Activated CD4-positive, alpha-beta T cell treated with anti-CD3 and anti-CD28 coated beads for 36 hours (primary cell): ENCODE measurements at regions of chr4 and their contacts with region 1.

Region 1: DNA sequence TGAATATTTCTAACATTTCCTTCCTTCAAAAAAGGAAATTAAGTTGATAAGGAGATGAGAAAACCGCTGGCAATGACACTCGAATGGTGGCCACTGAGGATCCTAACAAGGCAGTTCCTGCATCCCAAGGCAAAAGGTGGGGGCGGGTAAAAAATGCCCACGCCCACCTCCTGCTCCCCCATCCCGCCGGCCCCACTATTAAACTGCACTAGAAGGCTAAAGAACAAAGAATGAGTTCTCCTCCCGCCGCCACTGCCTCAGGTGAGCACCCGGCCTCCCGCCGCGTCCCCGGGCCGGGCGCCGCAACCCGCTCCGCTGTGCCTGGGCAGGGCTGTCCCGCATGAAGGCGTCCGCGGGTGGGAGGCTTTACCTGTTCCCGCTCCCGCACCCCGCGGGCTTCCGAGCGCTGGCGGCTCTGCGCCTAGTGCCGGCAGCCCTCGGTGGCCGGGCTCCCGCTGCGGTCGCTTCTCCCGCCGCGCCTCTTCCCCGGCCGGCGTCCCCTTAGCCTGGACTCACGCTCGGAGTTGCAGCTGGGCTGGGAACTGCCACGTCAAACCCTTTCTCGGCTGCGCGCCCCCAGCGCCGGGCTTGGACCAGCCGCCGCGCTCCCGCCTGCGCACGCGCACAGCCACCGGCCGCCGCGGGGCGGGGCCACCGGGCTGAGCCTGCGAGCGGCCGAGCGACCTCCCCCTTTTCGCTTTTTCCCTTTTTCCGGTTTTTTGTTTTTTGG is at the start of gene SEC24D:
- DNase-seq: peak; percentile 91
- ATAC-seq: peak; percentile 88
- H3K4me3 Mint-ChIP-seq: peak within 1 kb of the TSS; percentile 86
- H3K27ac Mint-ChIP-seq: peak within 1 kb of the TSS; percentile 98
- H3K4me1 Mint-ChIP-seq: peaks cover 20% of the 10 kb centered on the region
- H3K27me3 Mint-ChIP-seq: no peaks in the 10 kb centered on the region
- total RNA-seq, gene SEC24D: 28.5 to 33.0 TPM

Region 2: GRCh38 chr4:118278473-118279274 is 557.1 kb before region 1 on chr4:
- CTCF ChIA-PET with region 1: no interaction called
- POLR2A ChIA-PET with region 1: no interaction called
- intact Hi-C with region 1: loop called (anchors 2 to 5 kb)
- DNase-seq: peak; percentile 99
- ATAC-seq: peak; percentile 96
- H3K4me3 Mint-ChIP-seq: peak overlapping the region; percentile 96
- H3K27ac Mint-ChIP-seq: peak overlapping the region; percentile 99
- H3K4me1 Mint-ChIP-seq: peaks cover 37% of the 10 kb centered on the region
- H3K27me3 Mint-ChIP-seq: no peaks in the 10 kb centered on the region

Region 3: DNA sequence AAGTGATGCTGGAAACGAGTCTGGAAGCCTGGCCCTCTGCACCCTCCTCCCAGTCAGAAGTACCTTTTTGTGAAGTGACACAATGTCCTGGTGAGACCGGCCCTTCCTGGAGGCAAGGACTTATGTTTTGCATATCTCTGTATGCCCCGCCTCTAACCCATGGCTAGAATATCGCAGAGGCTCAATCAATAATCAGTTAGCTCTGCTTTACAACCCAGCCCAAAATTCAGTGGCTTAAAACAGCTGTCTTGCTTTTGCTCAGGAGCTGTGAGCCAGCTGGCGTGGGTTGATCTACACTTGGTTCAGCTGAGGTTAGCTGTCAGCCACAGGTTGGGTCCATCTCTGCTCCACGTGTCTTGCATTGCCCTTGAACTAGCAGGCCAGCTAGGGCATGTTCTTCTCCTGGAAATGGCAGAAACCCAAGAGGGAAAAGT is 249.4 kb before region 1 on chr4:
- CTCF ChIA-PET with region 1: no interaction called
- POLR2A ChIA-PET with region 1: no interaction called
- intact Hi-C with region 1: loop called in 1 of 2 experiments (anchors 1 kb)
- DNase-seq: no peak
- ATAC-seq: no peak
- H3K4me3 Mint-ChIP-seq: no peak overlapping the region
- H3K27ac Mint-ChIP-seq: no peak overlapping the region
- H3K4me1 Mint-ChIP-seq: peaks cover 9% of the 10 kb centered on the region
- H3K27me3 Mint-ChIP-seq: peaks cover 16% of the 10 kb centered on the region

Region 4: GRCh38 chr4:118684873-118685811 is 150.6 kb before region 1 on chr4 and contains the start of gene METTL14:
- CTCF ChIA-PET with region 1: no interaction called
- POLR2A ChIA-PET with region 1: no interaction called
- intact Hi-C with region 1: loop called in 1 of 2 experiments (anchors 1 kb)
- DNase-seq: peak; percentile 93
- ATAC-seq: peak; percentile 96
- H3K4me3 Mint-ChIP-seq: peak within 1 kb of the TSS; percentile 99
- H3K27ac Mint-ChIP-seq: peak within 1 kb of the TSS; percentile 90
- H3K4me1 Mint-ChIP-seq: peaks cover 24% of the 10 kb centered on the region
- H3K27me3 Mint-ChIP-seq: peaks cover 2% of the 10 kb centered on the region
- total RNA-seq, gene METTL14: 45.1 to 48.4 TPM

Region 5: GRCh38 chr4:118850488-118851173 is 14.9 kb after region 1 on chr4:
- CTCF ChIA-PET with region 1: interaction called, 6 read pairs
- POLR2A ChIA-PET with region 1: no interaction called
- intact Hi-C with region 1: loop called (anchors 1 kb)
- DNase-seq: peak; percentile 43
- ATAC-seq: peak; percentile 88
- H3K4me3 Mint-ChIP-seq: peak overlapping the region; percentile 85
- H3K27ac Mint-ChIP-seq: peak overlapping the region; percentile 91
- H3K4me1 Mint-ChIP-seq: peaks cover 28% of the 10 kb centered on the region
- H3K27me3 Mint-ChIP-seq: peaks cover 3% of the 10 kb centered on the region

Region 6: DNA sequence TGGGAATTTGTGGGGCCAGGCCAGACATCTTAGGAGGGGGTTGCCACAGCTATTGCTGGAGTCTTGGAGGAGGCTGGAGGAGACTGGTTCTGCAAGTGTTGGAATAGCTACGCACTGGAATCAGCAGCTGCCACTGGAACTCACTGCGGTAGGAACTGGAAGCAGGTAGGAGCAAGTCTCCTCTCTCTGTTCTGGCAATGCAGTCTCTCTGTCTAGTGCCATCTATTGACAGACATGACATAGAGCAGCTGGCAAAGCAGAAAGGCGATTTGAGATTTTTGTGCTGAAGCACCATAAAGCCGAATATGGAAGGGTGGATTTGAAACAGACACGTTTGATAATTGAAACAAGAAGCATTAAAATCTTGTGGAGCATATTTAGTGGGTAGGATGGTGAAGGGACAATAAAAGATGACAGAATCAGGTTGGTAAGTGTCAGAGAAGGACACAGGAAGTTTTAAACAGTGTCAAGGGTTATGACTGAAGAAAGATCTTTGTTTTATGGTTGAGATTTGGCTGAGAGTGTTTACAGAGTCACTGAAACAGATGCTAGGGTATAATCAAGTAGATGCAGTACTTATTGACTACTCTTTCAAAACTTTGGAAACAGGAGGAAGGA is 29.5 kb after region 1 on chr4:
- CTCF ChIA-PET with region 1: interaction called, 11 read pairs
- POLR2A ChIA-PET with region 1: no interaction called
- intact Hi-C with region 1: no loop called
- DNase-seq: peak; percentile 23
- ATAC-seq: peak; percentile 70
- H3K4me3 Mint-ChIP-seq: no peak overlapping the region
- H3K27ac Mint-ChIP-seq: no peak overlapping the region
- H3K4me1 Mint-ChIP-seq: peaks cover 5% of the 10 kb centered on the region
- H3K27me3 Mint-ChIP-seq: no peaks in the 10 kb centered on the region

Region 7: DNA sequence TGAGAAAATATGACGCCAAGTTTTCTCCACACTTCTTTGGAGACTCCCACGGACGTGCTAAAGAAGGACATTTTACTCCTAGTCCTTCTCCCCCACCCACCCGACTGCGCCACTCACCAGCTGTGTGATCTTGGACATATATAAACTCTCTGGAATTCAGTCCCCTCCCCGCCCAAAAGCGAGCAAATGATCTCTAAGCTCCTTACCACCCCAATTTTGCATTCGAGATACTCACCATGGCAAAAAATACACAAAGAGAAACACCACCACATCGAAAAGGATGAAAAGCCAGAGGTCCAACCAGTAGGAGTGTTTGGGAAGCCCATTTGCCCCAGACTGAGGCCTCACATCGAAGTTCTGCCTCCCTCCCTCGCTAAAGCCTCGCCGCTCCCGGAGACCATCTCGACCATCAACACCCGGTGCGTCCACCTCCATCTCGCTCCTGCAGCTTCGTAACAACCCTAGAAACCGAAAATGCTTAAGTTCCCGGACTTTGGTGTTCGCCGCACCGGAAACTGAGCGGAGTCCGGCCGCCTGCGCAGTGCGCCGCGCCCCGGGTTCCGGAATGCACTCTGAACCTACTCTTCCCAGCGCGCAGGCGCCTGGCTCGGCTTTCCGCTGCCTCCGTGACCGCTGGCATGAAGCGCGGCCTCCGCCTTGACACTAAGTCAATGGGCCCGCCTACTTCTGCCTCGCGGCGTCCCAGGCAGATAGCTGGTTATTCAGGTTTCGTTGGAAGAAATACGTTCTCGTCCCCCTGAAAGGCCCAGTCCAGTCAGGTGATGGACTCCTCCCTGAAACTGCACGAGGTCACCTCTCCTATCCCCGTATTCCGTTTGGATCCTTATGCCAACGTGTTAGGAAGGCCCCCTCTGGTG is 464.6 kb after region 1 on chr4:
- CTCF ChIA-PET with region 1: no interaction called
- POLR2A ChIA-PET with region 1: no interaction called
- intact Hi-C with region 1: loop called in 1 of 2 experiments (anchors 5 kb)
- DNase-seq: peak; percentile 97
- ATAC-seq: peak; percentile 98
- H3K4me3 Mint-ChIP-seq: peak overlapping the region; percentile 100
- H3K27ac Mint-ChIP-seq: peak overlapping the region; percentile 96
- H3K4me1 Mint-ChIP-seq: peaks cover 25% of the 10 kb centered on the region
- H3K27me3 Mint-ChIP-seq: no peaks in the 10 kb centered on the region